Naive thymus-derived CD4-positive, alpha-beta T cell (primary cell): ENCODE measurements at regions of chr6 and their contacts with region 1.

Region 1: GRCh38 chr6:126685182-126685581 is 345.3 kb downstream of the CENPW start:
- DNase-seq: no peak
- ATAC-seq: no peak
- H3K4me3 ChIP-seq: no peak overlapping the region
- H3K4me3 Mint-ChIP-seq: no peak overlapping the region
- H3K27ac ChIP-seq: no peak overlapping the region
- H3K27ac Mint-ChIP-seq: no peak overlapping the region
- H3K4me1 ChIP-seq: no peaks in the 10 kb centered on the region
- H3K4me1 Mint-ChIP-seq: no peaks in the 10 kb centered on the region
- H3K27me3 ChIP-seq: no peaks in the 10 kb centered on the region
- H3K27me3 Mint-ChIP-seq: no peaks in the 10 kb centered on the region

Region 2: DNA sequence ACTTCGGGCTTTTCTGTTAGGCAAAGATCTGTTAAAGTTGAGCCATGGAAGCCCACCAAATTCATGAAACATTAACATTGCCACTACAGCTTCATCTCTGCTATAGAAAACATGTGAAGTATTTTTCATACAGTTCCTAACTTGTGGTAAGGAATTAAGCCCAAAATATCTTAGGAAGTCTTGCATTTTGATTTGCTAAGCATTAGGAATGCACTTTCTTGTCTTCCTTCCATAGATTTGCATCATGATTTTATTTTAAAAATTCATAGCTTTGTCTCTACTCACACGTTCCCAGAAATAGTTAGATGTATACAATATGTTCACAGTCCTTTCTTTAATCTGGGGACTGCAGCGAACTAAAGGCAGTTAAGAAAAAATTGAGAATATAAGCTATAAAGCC is 19.6 kb before region 1 on chr6:
- CTCF ChIA-PET with region 1: no interaction called
- POLR2A ChIA-PET with region 1: no interaction called
- intact Hi-C with region 1: loop called in 1 of 2 experiments (anchors 1 kb)
- DNase-seq: no peak
- ATAC-seq: no peak
- H3K4me3 ChIP-seq: no peak overlapping the region
- H3K4me3 Mint-ChIP-seq: no peak overlapping the region
- H3K27ac ChIP-seq: no peak overlapping the region
- H3K27ac Mint-ChIP-seq: no peak overlapping the region
- H3K4me1 ChIP-seq: no peaks in the 10 kb centered on the region
- H3K4me1 Mint-ChIP-seq: no peaks in the 10 kb centered on the region
- H3K27me3 ChIP-seq: no peaks in the 10 kb centered on the region
- H3K27me3 Mint-ChIP-seq: no peaks in the 10 kb centered on the region